CD8-positive, alpha-beta T cell (primary cell): ENCODE measurements at regions of chr20 and their contacts with region 1.

Region 1: GRCh38 chr20:32762149-32762753 is at the start of gene DNMT3B:
- DNase-seq: peak; percentile 47 to 79 (median 73)
- ATAC-seq: peak; percentile 89
- H3K4me3 ChIP-seq: peak within 1 kb of the TSS; percentile 62 to 65
- H3K4me3 Mint-ChIP-seq: peak within 1 kb of the TSS; percentile 87
- H3K27ac ChIP-seq: no peak within 1 kb of the TSS
- H3K27ac Mint-ChIP-seq: no peak within 1 kb of the TSS
- H3K4me1 ChIP-seq: peaks cover 14% of the 10 kb centered on the region
- H3K4me1 Mint-ChIP-seq: peaks cover 16% of the 10 kb centered on the region
- H3K27me3 ChIP-seq: no peaks in the 10 kb centered on the region
- H3K27me3 Mint-ChIP-seq: no peaks in the 10 kb centered on the region
- CTCF ChIP-seq: no peak
- total RNA-seq, gene DNMT3B: 0.30 to 0.36 TPM

Region 2: GRCh38 chr20:32743237-32744112 is 18.8 kb before region 1 on chr20 and contains the start of gene COMMD7:
- CTCF ChIA-PET with region 1: interaction called, 5 read pairs
- POLR2A ChIA-PET with region 1: interaction called, 10 read pairs
- intact Hi-C with region 1: loop called (anchors 1 to 2 kb)
- DNase-seq: peak; percentile 33 to 80 (median 65)
- ATAC-seq: peak; percentile 80
- H3K4me3 ChIP-seq: peak within 1 kb of the TSS; percentile 74 to 76
- H3K4me3 Mint-ChIP-seq: peak within 1 kb of the TSS; percentile 93
- H3K27ac ChIP-seq: peak within 1 kb of the TSS; percentile 79 to 91
- H3K27ac Mint-ChIP-seq: peak within 1 kb of the TSS; percentile 96
- H3K4me1 ChIP-seq: peaks cover 20% of the 10 kb centered on the region
- H3K4me1 Mint-ChIP-seq: peaks cover 38% of the 10 kb centered on the region
- H3K27me3 ChIP-seq: no peaks in the 10 kb centered on the region
- H3K27me3 Mint-ChIP-seq: no peaks in the 10 kb centered on the region
- CTCF ChIP-seq: no peak
- total RNA-seq, gene COMMD7: 25.5 to 26.7 TPM